ENCODE measurements at regions of chr5 and their contacts with region 1.

Region 1: GRCh38 chr5:133025804-133026663 is at the start of gene ZCCHC10:
- DNase-seq: peak; percentile 81 to 90 (median 89)
- H3K4me3 ChIP-seq: peak within 1 kb of the TSS; percentile 55 to 94 (median 87)
- H3K4me3 Mint-ChIP-seq: peak within 1 kb of the TSS; percentile 92 to 96
- H3K27ac ChIP-seq: peak within 1 kb of the TSS; percentile 93 to 97
- H3K27ac Mint-ChIP-seq: peak within 1 kb of the TSS; percentile 97 to 99 (median 98)
- H3K4me1 ChIP-seq: peaks cover 9 to 16% of the 10 kb centered on the region in 2 donors
- H3K4me1 Mint-ChIP-seq: peaks cover 15% of the 10 kb centered on the region
- H3K27me3 ChIP-seq: no peaks in the 10 kb centered on the region
- H3K27me3 Mint-ChIP-seq: peaks cover 0 to 9% (median 2%) of the 10 kb centered on the region in 3 donors
- CTCF ChIP-seq: no peak
- polyA plus RNA-seq, gene ZCCHC10: 10.7 to 52.7 (median 45.3) TPM

Region 2: DNA sequence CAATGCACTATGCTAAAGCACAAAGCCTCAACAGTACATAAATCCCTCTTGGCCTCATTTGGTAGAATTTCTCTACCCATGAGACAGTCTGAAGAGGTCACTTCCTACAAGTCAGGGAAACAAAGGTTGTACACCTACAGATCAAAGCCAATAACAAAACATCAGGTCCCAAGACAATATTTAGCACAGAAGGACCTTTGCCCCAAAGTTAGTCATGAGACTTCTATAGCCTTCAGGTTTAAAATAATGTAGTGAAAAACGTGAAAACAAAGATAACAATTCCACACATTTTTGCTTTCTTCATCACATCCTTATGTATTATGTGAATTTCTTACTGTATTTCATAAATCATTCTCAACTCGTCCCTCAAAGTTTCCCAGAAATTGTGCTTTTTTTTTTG is 78.4 kb before region 1 on chr5:
- intact Hi-C with region 1: no loop called
- DNase-seq: no peak
- H3K4me3 ChIP-seq: no peak overlapping the region
- H3K4me3 Mint-ChIP-seq: no peak overlapping the region
- H3K27ac ChIP-seq: no peak overlapping the region
- H3K27ac Mint-ChIP-seq: no peak overlapping the region
- H3K4me1 ChIP-seq: no peaks in the 10 kb centered on the region
- H3K4me1 Mint-ChIP-seq: peaks cover 25% of the 10 kb centered on the region
- H3K27me3 ChIP-seq: no peaks in the 10 kb centered on the region
- H3K27me3 Mint-ChIP-seq: no peaks in the 10 kb centered on the region
- CTCF ChIP-seq: no peak

Region 3: DNA sequence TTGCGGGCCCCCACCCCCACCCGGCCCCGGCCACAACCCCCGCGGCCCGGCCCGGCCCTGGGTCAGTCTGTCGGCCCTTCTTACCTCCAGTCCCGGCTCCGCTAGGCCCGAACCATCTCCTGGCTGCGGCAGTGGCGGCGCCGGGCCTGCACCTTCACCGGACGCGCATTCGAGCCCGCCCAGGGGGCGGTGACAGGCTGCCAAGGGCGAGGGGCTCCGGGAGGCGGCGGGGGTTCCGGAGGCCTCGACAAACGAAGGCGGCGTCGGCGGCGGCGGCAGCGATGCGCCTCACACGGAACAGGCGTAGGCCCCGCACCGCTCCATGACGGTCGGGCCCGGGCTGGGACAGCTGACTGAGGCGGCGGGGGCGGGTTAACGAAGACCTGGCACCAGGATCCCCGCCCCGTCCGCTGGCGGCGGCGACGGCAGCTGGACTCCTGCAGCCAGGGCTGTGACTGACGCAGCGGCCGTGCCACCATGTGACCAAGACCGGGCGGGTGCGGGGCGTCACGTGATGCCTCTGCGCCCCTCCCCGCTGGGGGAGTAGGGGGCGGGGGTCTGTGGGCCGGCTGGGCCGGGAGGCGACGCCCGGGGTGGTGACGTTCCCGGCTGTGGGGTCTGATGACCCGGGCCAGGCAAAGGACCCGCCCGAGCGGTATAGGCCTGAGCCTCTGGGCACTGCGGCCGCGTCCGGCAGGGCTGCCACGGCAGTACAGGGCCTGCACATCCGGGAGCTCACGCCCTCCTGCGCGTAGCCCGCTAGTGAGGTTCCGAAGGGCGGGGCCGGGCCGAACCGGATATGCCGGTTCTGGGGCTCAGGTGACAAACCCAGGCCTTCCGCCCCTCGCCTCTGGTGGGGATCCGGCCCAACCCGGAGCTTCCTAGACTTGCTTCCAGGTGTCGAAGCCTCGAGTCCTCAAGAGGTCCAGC is 62.6 kb before region 1 on chr5 and contains the start of gene AFF4:
- intact Hi-C with region 1: loop called (anchors 2 to 5 kb)
- DNase-seq: peak; percentile 95 to 98 (median 97)
- H3K4me3 ChIP-seq: peak within 1 kb of the TSS; percentile 85 to 93 (median 86)
- H3K4me3 Mint-ChIP-seq: peak within 1 kb of the TSS; percentile 90 to 97
- H3K27ac ChIP-seq: peak within 1 kb of the TSS; percentile 97 to 99
- H3K27ac Mint-ChIP-seq: peak within 1 kb of the TSS; percentile 94 to 99 (median 97)
- H3K4me1 ChIP-seq: peaks cover 21 to 28% of the 10 kb centered on the region in 2 donors
- H3K4me1 Mint-ChIP-seq: peaks cover 30% of the 10 kb centered on the region
- H3K27me3 ChIP-seq: no peaks in the 10 kb centered on the region
- H3K27me3 Mint-ChIP-seq: no peaks in the 10 kb centered on the region
- CTCF ChIP-seq: no peak
- polyA plus RNA-seq, gene AFF4: 9.7 to 17.7 (median 17.6) TPM

Region 4: GRCh38 chr5:132988124-132988408 is 38.0 kb before region 1 on chr5:
- intact Hi-C with region 1: no loop called
- DNase-seq: no peak
- H3K4me3 ChIP-seq: no peak overlapping the region
- H3K4me3 Mint-ChIP-seq: no peak overlapping the region
- H3K27ac ChIP-seq: no peak overlapping the region
- H3K27ac Mint-ChIP-seq: no peak overlapping the region
- H3K4me1 ChIP-seq: no peaks in the 10 kb centered on the region
- H3K4me1 Mint-ChIP-seq: no peaks in the 10 kb centered on the region
- H3K27me3 ChIP-seq: no peaks in the 10 kb centered on the region
- H3K27me3 Mint-ChIP-seq: peaks cover 2 to 4% (median 3%) of the 10 kb centered on the region in 3 donors
- CTCF ChIP-seq: no peak

Region 5: DNA sequence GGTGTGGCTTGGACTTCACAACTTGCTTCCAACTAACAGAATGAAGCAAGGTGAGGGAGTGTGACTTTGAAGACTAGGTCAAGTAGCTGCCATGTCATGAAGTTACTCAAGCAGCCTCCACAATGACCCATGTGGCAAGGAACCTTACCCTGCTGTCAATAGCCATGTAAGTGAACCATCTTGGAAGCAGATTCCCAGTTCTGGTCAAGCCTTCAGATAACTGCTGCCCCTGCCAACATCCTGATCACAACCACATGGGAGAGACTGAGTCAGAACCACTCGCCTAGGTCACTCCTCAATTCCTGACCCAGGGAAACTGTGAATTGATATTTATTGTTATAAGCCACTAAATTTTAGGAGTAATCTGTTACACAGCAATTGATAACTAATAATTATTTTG is 10.6 kb before region 1 on chr5:
- intact Hi-C with region 1: no loop called
- DNase-seq: no peak
- H3K4me3 ChIP-seq: no peak overlapping the region
- H3K4me3 Mint-ChIP-seq: no peak overlapping the region
- H3K27ac ChIP-seq: no peak overlapping the region
- H3K27ac Mint-ChIP-seq: peak overlapping the region in 3 of 7 donors; percentile 11 to 60 (median 30)
- H3K4me1 ChIP-seq: no peaks in the 10 kb centered on the region
- H3K4me1 Mint-ChIP-seq: no peaks in the 10 kb centered on the region
- H3K27me3 ChIP-seq: no peaks in the 10 kb centered on the region
- H3K27me3 Mint-ChIP-seq: no peaks in the 10 kb centered on the region
- CTCF ChIP-seq: no peak

Region 6: GRCh38 chr5:133051580-133052332 is 25.7 kb after region 1 on chr5 and contains the start of gene HSPA4:
- intact Hi-C with region 1: loop called in 1 of 2 experiments (anchors 2 kb)
- DNase-seq: peak; percentile 98 to 99 (median 98)
- H3K4me3 ChIP-seq: peak within 1 kb of the TSS; percentile 71 to 92 (median 91)
- H3K4me3 Mint-ChIP-seq: peak within 1 kb of the TSS; percentile 91 to 95
- H3K27ac ChIP-seq: peak within 1 kb of the TSS; percentile 98 to 99
- H3K27ac Mint-ChIP-seq: peak within 1 kb of the TSS; percentile 98 to 100 (median 99)
- H3K4me1 ChIP-seq: peaks cover 19 to 25% of the 10 kb centered on the region in 2 donors
- H3K4me1 Mint-ChIP-seq: peaks cover 29% of the 10 kb centered on the region
- H3K27me3 ChIP-seq: no peaks in the 10 kb centered on the region
- H3K27me3 Mint-ChIP-seq: peaks cover 0 to 1% (median 0%) of the 10 kb centered on the region in 3 donors
- CTCF ChIP-seq: no peak
- polyA plus RNA-seq, gene HSPA4: 15.7 to 52.0 (median 27.7) TPM